HEK293 (cell line): ENCODE measurements at regions of chr6 and their contacts with region 1.

Region 1: DNA sequence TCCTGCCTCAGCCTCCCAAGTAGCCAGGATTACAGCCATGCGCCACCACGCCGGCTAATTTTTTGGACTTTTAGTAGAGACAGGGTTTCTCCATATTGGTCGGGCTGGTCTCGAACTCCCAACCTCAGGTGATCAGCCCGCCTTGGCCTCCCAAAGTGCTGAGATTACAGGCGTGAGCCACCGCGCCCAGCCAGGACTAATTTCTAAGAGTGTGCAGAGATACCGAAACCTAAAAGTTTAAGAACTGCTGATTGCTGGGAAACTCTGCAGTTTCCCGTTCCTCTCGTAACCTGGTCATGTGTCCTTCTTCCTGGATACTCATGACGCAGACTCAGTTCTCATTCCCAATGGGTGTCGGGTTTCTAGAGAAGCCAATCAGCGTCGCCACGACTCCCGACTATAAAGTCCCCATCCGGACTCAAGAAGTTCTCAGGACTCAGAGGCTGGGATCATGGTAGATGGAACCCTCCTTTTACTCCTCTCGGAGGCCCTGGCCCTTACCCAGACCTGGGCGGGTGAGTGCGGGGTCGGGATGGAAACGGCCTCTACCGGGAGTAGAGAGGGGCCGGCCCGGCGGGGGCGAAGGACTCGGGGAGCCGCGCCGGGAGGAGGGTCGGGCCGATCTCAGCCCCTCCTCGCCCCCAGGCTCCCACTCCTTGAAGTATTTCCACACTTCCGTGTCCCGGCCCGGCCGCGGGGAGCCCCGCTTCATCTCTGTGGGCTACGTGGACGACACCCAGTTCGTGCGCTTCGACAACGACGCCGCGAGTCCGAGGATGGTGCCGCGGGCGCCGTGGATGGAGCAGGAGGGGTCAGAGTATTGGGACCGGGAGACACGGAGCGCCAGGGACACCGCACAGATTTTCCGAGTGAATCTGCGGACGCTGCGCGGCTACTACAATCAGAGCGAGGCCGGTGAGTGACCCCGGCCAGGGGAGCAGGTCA is at the start of gene HLA-E:
- H3K4me3 ChIP-seq: peak within 1 kb of the TSS; percentile 78
- H3K27ac ChIP-seq: peak within 1 kb of the TSS; percentile 80
- H3K4me1 ChIP-seq: no peaks in the 10 kb centered on the region
- CTCF ChIP-seq: no peak

Region 2: GRCh38 chr6:29723262-29723665 is 766.1 kb before region 1 on chr6 and contains the start of gene HLA-F:
- CTCF ChIA-PET with region 1: no interaction called
- POLR2A ChIA-PET with region 1: no interaction called
- H3K4me3 ChIP-seq: peak within 1 kb of the TSS; percentile 48
- H3K27ac ChIP-seq: peak within 1 kb of the TSS; percentile 73; the same call in 1 of the 2 replicates
- H3K4me1 ChIP-seq: no peaks in the 10 kb centered on the region; the same call in 1 of the 2 replicates
- CTCF ChIP-seq: no peak; the same call in 1 of the 2 replicates

Region 3: GRCh38 chr6:30311101-30311500 is 178.3 kb before region 1 on chr6:
- CTCF ChIA-PET with region 1: no interaction called
- POLR2A ChIA-PET with region 1: no interaction called
- H3K4me3 ChIP-seq: no peak overlapping the region
- H3K27ac ChIP-seq: no peak overlapping the region
- H3K4me1 ChIP-seq: no peaks in the 10 kb centered on the region
- CTCF ChIP-seq: no peak

Region 4: GRCh38 chr6:30500421-30501355 is 11.3 kb after region 1 on chr6:
- CTCF ChIA-PET with region 1: interaction called, 16 read pairs
- POLR2A ChIA-PET with region 1: interaction called, 11 read pairs
- H3K4me3 ChIP-seq: no peak overlapping the region
- H3K27ac ChIP-seq: no peak overlapping the region
- H3K4me1 ChIP-seq: no peaks in the 10 kb centered on the region
- CTCF ChIP-seq: no peak

Region 5: GRCh38 chr6:30508890-30509736 is 19.8 kb after region 1 on chr6:
- CTCF ChIA-PET with region 1: interaction called, 10 read pairs
- POLR2A ChIA-PET with region 1: interaction called, 3 read pairs
- H3K4me3 ChIP-seq: no peak overlapping the region
- H3K27ac ChIP-seq: no peak overlapping the region
- H3K4me1 ChIP-seq: no peaks in the 10 kb centered on the region
- CTCF ChIP-seq: no peak

Region 6: GRCh38 chr6:30533460-30534294 is 44.3 kb after region 1 on chr6:
- CTCF ChIA-PET with region 1: interaction called, 324 read pairs
- POLR2A ChIA-PET with region 1: interaction called, 4 read pairs
- H3K4me3 ChIP-seq: no peak overlapping the region
- H3K27ac ChIP-seq: no peak overlapping the region
- H3K4me1 ChIP-seq: no peaks in the 10 kb centered on the region
- CTCF ChIP-seq: no peak